Transverse colon (tissue), 4 donors: ENCODE measurements at regions of chr7 and their contacts with region 1.

Region 1: GRCh38 chr7:9863545-9863944 is 1110.1 kb upstream of the PHF14 start:
- DNase-seq: no peak
- H3K4me3 ChIP-seq: no peak overlapping the region
- H3K27ac ChIP-seq: no peak overlapping the region
- H3K4me1 ChIP-seq: no peaks in the 10 kb centered on the region
- H3K27me3 ChIP-seq: no peaks in the 10 kb centered on the region
- CTCF ChIP-seq: no peak
- EP300 ChIP-seq: no peak
- POLR2A ChIP-seq: no peak

Region 2: DNA sequence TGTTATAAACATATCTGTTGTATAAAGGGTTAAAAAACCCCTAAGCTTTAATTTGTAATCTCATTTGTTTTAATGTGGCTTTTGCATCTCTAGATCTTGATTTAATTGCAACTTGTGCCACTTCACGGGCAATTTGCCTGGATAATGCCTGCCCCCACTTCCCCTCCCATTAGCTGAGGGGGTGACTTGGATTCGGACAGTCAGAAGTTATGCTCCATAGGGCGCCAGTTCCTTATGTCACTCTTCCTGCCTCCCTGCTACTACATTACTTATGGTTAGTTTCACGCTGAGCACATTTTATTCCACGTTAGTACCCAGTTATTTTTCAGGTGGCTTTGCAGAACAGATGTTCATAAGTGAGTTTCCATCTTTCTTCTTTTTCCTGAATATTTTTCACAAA is 94.9 kb after region 1 on chr7:
- in situ Hi-C with region 1: loop called in 1 of 4 experiments (anchors 25 kb)
- intact Hi-C with region 1: no loop called
- DNase-seq: no peak
- H3K4me3 ChIP-seq: no peak overlapping the region
- H3K27ac ChIP-seq: no peak overlapping the region
- H3K4me1 ChIP-seq: no peaks in the 10 kb centered on the region
- H3K27me3 ChIP-seq: no peaks in the 10 kb centered on the region
- CTCF ChIP-seq: no peak
- EP300 ChIP-seq: no peak
- POLR2A ChIP-seq: no peak

Region 3: DNA sequence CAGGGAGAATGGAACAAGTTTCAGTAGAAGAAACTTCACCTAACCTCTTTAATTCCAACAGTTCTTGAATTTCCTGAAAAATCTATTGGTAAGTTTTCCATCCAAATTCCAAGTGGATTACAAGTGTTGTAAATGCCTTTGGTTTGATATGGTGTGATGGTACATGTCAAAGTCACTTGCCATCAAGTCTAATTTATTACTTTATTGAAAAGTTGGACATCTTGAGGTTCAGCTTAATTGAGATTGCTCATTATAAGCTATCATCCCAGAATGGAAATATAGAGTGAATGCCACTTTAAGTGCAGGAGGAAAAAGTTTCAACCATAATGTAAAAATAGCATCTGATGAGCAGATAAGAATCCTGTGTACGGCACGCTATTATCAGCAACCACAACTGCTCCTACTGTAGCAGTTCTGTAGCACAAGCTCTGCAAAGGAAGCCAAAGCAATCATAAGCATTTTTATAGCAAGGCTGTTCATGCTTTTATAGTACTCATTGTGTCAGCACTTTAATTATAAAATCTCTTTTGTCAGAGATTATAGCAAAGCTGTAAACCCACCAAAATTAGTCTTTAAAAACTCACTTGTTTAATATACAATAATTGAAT is 118.3 kb after region 1 on chr7:
- in situ Hi-C with region 1: no loop called
- intact Hi-C with region 1: no loop called
- DNase-seq: no peak
- H3K4me3 ChIP-seq: no peak overlapping the region
- H3K27ac ChIP-seq: no peak overlapping the region
- H3K4me1 ChIP-seq: no peaks in the 10 kb centered on the region
- H3K27me3 ChIP-seq: no peaks in the 10 kb centered on the region
- CTCF ChIP-seq: no peak
- EP300 ChIP-seq: no peak
- POLR2A ChIP-seq: no peak

Region 4: GRCh38 chr7:10106609-10107008 is 243.1 kb after region 1 on chr7:
- in situ Hi-C with region 1: no loop called
- intact Hi-C with region 1: no loop called
- DNase-seq: no peak
- H3K4me3 ChIP-seq: no peak overlapping the region
- H3K27ac ChIP-seq: no peak overlapping the region
- H3K4me1 ChIP-seq: no peaks in the 10 kb centered on the region
- H3K27me3 ChIP-seq: no peaks in the 10 kb centered on the region
- CTCF ChIP-seq: no peak
- EP300 ChIP-seq: no peak
- POLR2A ChIP-seq: no peak